Transverse colon (tissue), 4 donors: ENCODE measurements at regions of chr4 and their contacts with region 1.

Region 1: DNA sequence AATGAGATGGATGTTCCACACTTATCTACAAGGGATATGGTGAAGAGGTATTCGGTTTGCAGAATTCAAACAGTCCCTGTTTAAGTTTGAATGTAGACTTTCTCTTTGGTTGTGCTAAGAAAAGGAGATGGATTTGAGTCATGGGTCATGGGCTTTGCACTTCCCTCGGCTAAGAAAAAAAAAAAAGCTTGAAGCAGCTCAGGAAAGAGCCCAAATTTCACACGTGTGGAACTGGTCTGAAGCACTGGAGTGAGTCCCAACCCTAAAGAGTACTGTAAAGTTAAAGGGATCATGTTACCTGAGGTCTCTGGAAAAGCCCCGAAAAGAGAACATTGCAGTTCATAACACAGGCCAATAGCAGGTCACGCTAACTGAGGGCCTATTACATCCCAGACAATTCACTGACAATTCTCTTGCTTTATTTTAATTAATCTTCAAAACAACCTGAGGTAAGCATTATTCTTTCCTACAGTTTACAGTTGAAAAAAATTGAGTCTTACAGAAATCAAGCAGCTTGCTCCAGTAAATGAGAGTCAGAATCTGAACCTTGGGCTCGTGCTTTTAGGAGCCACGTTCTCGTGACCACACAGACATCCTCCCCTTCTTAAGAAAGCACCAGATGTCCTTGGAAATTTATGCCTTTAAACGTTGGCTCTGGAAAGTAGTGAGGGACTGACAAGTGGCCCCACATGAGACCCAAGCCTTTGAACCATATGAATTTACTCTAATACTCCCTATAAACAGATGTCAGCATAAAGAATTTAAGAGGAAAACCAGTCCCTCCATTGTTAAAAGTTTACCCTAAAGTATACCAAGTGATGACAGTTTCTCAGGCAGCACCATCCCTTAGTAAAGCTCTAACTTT is 89.3 kb downstream of the MAD2L1 start:
- DNase-seq: no peak
- H3K4me3 ChIP-seq: no peak overlapping the region
- H3K27ac ChIP-seq: peak overlapping the region in 3 of 4 donors; percentile 35 to 71 (median 54)
- H3K4me1 ChIP-seq: peaks cover 0 to 11% (median 6%) of the 10 kb centered on the region in 4 donors
- H3K27me3 ChIP-seq: no peaks in the 10 kb centered on the region
- CTCF ChIP-seq: no peak
- EP300 ChIP-seq: no peak
- POLR2A ChIP-seq: no peak

Region 2: GRCh38 chr4:119659616-119660015 is 317.7 kb before region 1 on chr4:
- in situ Hi-C with region 1: no loop called
- intact Hi-C with region 1: loop called (anchors 10 kb)
- DNase-seq: no peak
- H3K4me3 ChIP-seq: no peak overlapping the region
- H3K27ac ChIP-seq: no peak overlapping the region
- H3K4me1 ChIP-seq: peaks cover 0 to 13% (median 3%) of the 10 kb centered on the region in 4 donors
- H3K27me3 ChIP-seq: no peaks in the 10 kb centered on the region
- CTCF ChIP-seq: no peak
- EP300 ChIP-seq: no peak
- POLR2A ChIP-seq: no peak